A673 (cell line): ENCODE measurements at regions of chr1 and their contacts with region 1.

Region 1: DNA sequence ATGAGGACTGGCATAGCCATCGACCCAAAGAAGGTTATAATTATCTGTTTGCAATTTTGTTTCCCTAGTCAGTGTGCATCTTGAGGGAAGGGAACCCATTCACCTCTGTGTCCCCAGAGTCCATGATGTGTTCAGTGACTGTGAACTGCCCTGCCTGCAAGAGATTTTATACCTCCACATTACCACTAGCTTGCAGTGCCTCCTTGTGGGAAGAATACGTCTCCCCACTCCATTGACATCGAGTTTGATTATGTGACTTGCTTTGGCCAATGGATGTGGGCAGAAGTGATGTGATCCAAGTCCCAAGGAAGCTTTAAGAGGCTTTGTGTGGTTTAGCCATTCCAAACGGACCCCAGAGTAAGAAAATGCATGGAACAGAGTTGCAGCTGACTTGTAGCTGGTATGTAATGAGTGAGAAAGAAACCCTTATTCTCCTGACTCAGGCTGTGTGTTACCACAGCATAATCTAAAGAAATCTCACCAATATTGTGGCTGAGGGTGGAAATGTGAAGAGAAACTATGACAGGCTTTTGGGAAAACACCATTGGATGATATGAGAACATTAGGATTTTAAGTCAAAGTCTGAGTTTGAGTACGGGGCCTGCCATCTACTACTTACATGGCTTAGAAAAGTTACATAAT is 47.8 kb upstream of the NRDC start:
- DNase-seq: peak; percentile 82
- H3K4me3 ChIP-seq: no peak overlapping the region
- H3K27ac ChIP-seq: no peak overlapping the region
- H3K4me1 ChIP-seq: peaks cover 16% of the 10 kb centered on the region
- H3K27me3 ChIP-seq: no peaks in the 10 kb centered on the region
- CTCF ChIP-seq: peak; percentile 78

Region 2: GRCh38 chr1:51850420-51851223 is 75.7 kb before region 1 on chr1:
- CTCF ChIA-PET with region 1: interaction called, 4 read pairs
- POLR2A ChIA-PET with region 1: no interaction called
- intact Hi-C with region 1: loop called (anchors 1 kb)
- DNase-seq: no peak
- H3K4me3 ChIP-seq: no peak overlapping the region
- H3K27ac ChIP-seq: peak overlapping the region; percentile 83
- H3K4me1 ChIP-seq: peaks cover 32% of the 10 kb centered on the region
- H3K27me3 ChIP-seq: no peaks in the 10 kb centered on the region
- CTCF ChIP-seq: no peak